ENCODE measurements at regions of chr1 and their contacts with region 1.

Region 1: DNA sequence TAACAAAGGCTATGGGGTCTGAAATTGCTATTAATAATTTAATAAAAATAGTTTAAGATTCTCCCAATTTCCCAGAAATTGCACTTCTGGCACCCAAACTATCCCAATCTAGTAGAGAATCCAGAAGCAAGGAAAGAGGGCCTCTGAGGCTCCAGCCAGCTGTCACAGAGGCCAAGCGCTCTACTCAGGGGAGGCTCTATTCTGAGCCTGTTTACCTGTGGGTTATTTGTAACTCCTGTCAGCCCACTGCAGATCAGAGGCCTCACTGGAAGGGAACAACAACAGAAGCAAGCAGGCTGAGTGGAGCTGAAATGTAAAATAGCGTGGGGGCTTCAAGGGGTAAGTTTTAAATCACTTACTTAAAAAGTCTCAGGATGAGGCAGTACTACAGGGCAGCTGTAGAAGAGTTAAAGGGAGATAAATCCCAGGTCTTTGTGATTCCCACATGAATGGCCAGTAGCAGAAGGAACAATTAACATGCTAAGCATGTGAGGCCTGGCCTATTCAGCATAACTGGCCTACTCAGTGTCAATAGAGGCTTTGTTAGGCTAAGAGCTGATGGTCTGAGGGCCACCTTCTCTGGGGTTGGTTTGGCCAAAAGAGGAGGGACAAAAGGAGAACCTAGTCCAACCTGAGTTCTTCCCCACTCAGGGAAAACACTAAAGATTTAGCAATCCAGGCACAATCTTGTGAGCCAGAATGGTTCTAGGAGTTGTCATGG is 12.8 kb downstream of the ZNF687 start:
- DNase-seq: no peak
- H3K4me3 ChIP-seq: no peak overlapping the region
- H3K27ac ChIP-seq: no peak overlapping the region
- H3K4me1 ChIP-seq: no peaks in the 10 kb centered on the region
- H3K27me3 ChIP-seq: no peaks in the 10 kb centered on the region
- CTCF ChIP-seq: no peak
- POLR2A ChIP-seq: no peak

Region 2: DNA sequence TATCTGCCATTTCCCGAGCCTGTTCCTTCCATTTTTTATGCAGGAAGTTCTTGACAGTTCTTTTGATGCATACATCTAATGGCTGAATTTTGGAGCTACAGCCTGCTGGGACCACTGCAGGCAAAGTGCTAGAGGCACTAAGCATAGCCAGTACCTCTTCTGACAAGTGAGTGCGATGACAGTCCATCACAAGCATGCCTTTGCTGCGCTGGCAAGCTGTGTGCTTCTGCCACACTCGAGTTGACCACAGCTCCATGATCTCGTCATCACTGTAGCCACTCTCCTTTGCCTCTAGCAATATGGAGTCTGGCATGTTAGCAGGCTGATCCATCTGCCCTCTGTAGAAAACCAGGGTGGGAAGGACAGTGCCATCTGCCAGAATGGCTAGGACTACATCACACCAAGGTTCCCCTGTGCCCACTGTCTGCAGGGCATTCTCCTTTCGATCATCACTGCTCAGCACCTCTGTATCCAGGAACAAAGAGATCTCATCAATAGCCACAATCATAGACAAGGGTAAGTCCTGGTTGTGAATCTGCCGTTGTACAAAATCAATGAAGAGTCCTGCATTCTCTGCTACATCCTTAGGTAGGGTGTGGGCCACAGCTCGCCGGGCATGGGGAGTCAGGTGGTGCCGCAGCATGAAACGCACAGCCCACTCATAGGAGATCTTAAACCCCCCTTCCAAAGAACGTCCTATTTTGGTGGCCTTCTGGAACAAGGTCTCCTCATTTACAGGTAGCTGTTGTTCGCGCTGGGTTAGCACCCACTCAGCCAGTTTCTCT is 110.5 kb after region 1 on chr1:
- intact Hi-C with region 1: loop called (anchors 5 kb)
- DNase-seq: no peak
- H3K4me3 ChIP-seq: no peak overlapping the region
- H3K27ac ChIP-seq: no peak overlapping the region
- H3K4me1 ChIP-seq: peaks cover 15% of the 10 kb centered on the region
- H3K27me3 ChIP-seq: no peaks in the 10 kb centered on the region
- CTCF ChIP-seq: no peak
- POLR2A ChIP-seq: no peak

Measured in vagina (tissue), 2 donors.